BJ (cell line): ENCODE measurements at regions of chrX and their contacts with region 1.

Region 1: GRCh38 chrX:74536152-74536831 is 78.1 kb downstream of the RLIM start:
- DNase-seq: peak; percentile 33
- H3K4me3 ChIP-seq: peak overlapping the region; percentile 44
- H3K27me3 ChIP-seq: no peaks in the 10 kb centered on the region
- CTCF ChIP-seq: peak; percentile 42; the same call in 1 of the 2 replicates

Region 2: DNA sequence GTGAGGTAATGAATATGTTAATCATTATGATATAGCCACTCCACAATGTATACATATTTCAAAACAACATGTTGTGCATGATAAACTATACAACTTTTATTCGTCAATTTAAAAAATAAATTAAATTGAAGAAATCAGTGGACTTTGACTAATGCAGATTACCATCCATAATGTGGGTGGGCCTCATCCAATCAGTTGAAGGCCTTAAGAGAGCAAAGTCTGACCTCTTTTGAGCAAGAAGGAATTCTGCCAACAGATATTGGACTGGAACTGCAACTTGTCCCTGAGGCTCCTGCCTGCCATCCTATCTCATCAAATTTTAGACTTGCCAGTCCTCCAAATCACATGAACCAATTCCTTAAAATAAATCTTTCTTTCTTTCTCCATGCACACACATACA is 172.4 kb before region 1 on chrX:
- CTCF ChIA-PET with region 1: no interaction called
- POLR2A ChIA-PET with region 1: interaction called, 10 read pairs
- DNase-seq: no peak
- H3K4me3 ChIP-seq: no peak overlapping the region
- H3K27me3 ChIP-seq: no peaks in the 10 kb centered on the region
- CTCF ChIP-seq: no peak

Region 3: DNA sequence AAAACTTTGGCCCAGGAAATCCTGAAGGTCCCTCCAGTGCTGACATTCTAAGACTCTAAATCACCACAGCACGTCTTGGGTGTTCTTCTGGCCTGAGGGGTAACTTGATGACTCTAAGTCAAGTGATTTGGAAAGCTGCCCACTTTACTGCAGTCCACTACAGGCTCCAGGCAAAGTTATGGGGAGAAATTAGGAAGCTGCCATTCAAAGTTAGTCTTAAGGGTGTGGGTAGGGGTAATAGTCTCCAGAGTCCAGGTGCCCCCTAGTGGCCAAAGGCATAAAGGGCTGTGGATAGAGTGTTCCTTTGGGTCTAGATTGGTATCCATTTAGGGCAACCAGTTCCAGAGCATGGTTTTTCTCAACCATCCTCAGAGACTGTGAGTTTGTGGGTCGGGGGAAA is 153.7 kb before region 1 on chrX:
- CTCF ChIA-PET with region 1: interaction called, 14 read pairs
- POLR2A ChIA-PET with region 1: no interaction called
- DNase-seq: peak; percentile 29
- H3K4me3 ChIP-seq: no peak overlapping the region
- H3K27me3 ChIP-seq: no peaks in the 10 kb centered on the region
- CTCF ChIP-seq: peak; percentile 82

Region 4: GRCh38 chrX:74521961-74522751 is 14.1 kb before region 1 on chrX:
- CTCF ChIA-PET with region 1: interaction called, 13 read pairs
- POLR2A ChIA-PET with region 1: no interaction called
- DNase-seq: peak; percentile 13
- H3K4me3 ChIP-seq: no peak overlapping the region
- H3K27me3 ChIP-seq: no peaks in the 10 kb centered on the region
- CTCF ChIP-seq: no peak

Region 5: GRCh38 chrX:74656079-74656745 is 119.9 kb after region 1 on chrX:
- CTCF ChIA-PET with region 1: no interaction called
- POLR2A ChIA-PET with region 1: no interaction called
- DNase-seq: no peak
- H3K4me3 ChIP-seq: no peak overlapping the region
- H3K27me3 ChIP-seq: no peaks in the 10 kb centered on the region
- CTCF ChIP-seq: no peak

Region 6: DNA sequence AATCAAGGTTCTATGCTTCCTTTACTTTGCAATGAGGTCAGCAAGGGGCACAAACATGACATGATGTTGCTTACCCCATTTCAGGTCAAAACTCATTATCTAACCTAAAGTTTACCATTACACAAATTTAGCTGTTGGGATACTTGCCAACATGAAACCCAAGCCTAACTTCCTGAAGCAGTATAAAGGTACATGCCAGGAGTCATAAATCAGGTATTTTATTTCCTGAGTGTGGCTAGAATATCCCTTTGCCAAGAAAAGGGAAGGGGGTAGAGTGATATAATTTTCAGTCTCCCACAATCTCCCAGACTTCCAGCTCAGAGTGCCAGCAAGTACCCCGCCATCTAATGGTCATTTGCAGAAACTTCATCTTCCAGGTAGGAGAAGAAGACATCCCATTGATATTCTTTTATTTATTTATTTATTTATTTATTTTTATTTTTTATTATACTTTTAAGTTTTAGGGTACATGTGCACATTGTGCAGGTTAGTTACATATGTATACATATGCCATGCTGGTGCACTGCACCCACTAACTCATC is 252.3 kb after region 1 on chrX:
- CTCF ChIA-PET with region 1: no interaction called
- POLR2A ChIA-PET with region 1: no interaction called
- DNase-seq: no peak
- H3K4me3 ChIP-seq: no peak overlapping the region
- H3K27me3 ChIP-seq: no peaks in the 10 kb centered on the region
- CTCF ChIP-seq: no peak